ENCODE measurements at regions of chr1 and their contacts with region 1.

Region 1: GRCh38 chr1:41360993-41361753 is at the start of gene FOXO6:
- DNase-seq: peak; percentile 95 to 99
- H3K4me3 ChIP-seq: peak within 1 kb of the TSS; percentile 40 to 67 (median 47)
- H3K27ac ChIP-seq: no peak within 1 kb of the TSS
- H3K4me1 ChIP-seq: peaks cover 3 to 58% (median 42%) of the 10 kb centered on the region in 4 experiments
- H3K27me3 ChIP-seq: peaks cover 21 to 38% (median 36%) of the 10 kb centered on the region in 4 experiments
- CTCF ChIP-seq: peak; percentile 73 to 85 (median 76)
- EP300 ChIP-seq: no peak
- POLR2A ChIP-seq: no peak
- RAD21 ChIP-seq: peak; percentile 68 to 84
- total RNA-seq, gene FOXO6: 3.0 and 3.8 TPM in 2 replicates

Region 2: DNA sequence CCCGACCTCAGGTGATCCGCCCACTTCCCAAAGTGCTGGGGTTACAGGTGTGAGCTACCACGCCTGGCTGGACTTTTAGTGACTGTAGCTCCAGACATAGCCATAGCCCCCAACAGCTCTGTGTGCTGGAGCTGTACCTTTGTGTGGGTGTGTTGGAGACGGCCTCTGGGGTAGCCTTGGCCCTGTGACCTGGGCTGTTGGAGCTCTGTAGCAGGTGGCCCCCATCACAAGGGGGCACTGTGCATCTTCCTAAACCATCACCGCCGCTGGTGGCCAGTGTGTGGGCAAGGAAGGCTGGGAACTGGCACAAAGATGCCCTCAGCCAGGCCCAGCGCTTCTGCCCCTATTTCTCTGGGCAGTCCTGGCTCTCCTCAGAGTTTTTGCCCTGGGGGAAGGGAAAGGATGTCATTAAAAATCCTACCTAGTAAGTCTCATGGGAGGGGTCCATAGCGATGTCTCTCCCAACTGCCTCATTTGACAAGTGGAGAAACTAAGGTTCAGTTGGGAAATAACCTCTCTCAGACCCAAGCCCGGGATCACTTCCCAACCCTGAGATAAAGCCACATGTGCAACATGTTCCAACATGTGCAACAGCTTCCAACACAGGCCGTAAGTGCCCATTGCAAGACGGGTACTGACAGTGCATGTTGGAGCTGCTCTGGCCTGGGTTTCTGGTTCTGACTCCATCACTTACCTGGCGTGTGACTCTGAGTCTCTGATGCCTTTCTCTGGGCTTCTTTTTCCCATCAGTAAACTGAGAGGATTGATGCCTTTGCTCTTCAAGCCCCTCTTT is 38.1 kb before region 1 on chr1:
- CTCF ChIA-PET with region 1: interaction called, 26 read pairs
- POLR2A ChIA-PET with region 1: no interaction called
- DNase-seq: peak; percentile 36 to 80
- H3K4me3 ChIP-seq: no peak overlapping the region
- H3K27ac ChIP-seq: no peak overlapping the region
- H3K4me1 ChIP-seq: peaks cover 0 to 10% (median 6%) of the 10 kb centered on the region in 4 experiments; a peak in 6 of 7 replicates
- H3K27me3 ChIP-seq: no peaks in the 10 kb centered on the region; a peak in 1 of 7 replicates
- CTCF ChIP-seq: peak; percentile 87 to 93 (median 89)
- EP300 ChIP-seq: no peak
- POLR2A ChIP-seq: no peak
- RAD21 ChIP-seq: peak; percentile 94 to 96

Region 3: DNA sequence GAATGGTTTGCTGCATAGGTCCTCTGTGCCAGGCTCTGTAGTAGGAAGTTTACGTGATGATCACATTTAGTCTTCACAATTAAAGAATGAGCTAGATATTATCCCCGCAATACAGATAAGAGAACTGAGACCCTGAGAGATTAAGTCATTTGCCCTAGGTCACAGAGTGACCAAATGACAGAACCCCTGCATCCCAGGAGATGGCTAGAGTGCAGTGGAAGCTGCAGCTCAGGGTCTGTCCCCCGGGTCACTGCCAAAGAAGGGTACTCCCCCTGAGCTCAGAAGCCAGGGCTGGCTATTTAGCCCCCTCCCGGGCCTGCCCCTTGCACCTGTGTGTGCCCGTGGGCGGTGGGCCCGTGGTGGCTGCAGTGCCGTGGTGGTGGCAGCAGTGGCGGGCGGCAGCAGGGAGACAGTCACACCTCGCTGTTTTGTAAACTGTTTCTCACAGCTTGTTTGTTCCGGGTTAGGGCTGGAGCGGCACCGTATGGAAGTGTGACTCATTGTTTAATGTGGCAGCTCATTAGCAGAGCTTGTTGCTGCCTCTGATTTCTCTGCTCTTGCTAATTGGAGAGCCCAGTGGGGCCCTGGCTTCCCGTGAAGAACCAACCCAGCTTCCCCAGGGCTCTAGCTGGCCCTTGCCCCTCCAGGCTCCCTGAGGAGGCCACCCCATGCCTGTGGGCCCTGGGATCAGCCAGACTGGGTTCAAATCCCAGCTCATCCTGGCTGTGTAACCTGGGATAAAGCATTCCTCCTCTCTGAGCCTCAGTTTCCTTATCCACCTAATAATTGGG is 19.2 kb before region 1 on chr1:
- CTCF ChIA-PET with region 1: interaction called, 18 read pairs
- POLR2A ChIA-PET with region 1: interaction called, 3 read pairs
- DNase-seq: no peak
- H3K4me3 ChIP-seq: no peak overlapping the region
- H3K27ac ChIP-seq: no peak overlapping the region
- H3K4me1 ChIP-seq: peaks cover 0 to 7% (median 2%) of the 10 kb centered on the region in 4 experiments; a peak in 3 of 7 replicates
- H3K27me3 ChIP-seq: no peaks in the 10 kb centered on the region; a peak in 2 of 7 replicates
- CTCF ChIP-seq: no peak
- EP300 ChIP-seq: no peak
- POLR2A ChIP-seq: no peak
- RAD21 ChIP-seq: no peak

Region 4: DNA sequence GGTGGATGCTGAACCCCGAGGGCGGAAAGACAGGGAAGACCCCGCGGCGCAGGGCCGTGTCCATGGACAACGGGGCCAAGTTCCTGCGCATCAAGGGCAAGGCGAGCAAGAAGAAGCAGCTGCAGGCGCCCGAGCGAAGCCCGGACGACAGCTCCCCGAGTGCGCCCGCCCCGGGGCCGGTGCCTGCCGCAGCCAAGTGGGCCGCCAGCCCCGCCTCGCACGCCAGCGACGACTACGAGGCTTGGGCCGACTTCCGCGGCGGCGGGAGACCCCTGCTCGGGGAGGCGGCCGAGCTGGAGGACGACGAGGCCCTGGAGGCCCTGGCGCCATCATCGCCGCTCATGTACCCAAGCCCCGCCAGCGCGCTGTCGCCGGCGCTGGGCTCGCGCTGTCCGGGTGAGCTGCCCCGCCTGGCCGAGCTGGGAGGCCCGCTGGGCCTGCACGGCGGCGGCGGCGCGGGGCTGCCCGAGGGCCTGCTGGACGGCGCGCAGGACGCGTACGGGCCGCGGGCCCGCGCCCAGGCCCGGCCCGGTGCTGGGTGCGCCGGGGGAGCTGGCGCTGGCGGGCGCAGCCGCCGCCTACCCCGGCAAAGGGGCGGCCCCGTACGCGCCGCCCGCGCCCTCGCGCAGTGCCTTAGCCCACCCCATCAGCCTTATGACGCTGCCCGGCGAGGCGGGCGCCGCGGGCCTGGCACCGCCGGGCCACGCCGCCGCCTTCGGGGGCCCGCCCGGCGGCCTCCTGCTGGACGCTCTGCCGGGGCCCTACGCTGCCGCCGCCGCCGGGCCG is 20.7 kb after region 1 on chr1:
- CTCF ChIA-PET with region 1: interaction called, 173 read pairs
- POLR2A ChIA-PET with region 1: interaction called, 10 read pairs
- DNase-seq: no peak
- H3K4me3 ChIP-seq: peak overlapping the region; percentile 44 to 72 (median 56)
- H3K27ac ChIP-seq: no peak overlapping the region
- H3K4me1 ChIP-seq: peaks cover 0 to 29% (median 20%) of the 10 kb centered on the region in 4 experiments; a peak in 6 of 7 replicates
- H3K27me3 ChIP-seq: peaks cover 5 to 40% (median 34%) of the 10 kb centered on the region in 4 experiments
- CTCF ChIP-seq: no peak
- EP300 ChIP-seq: no peak
- POLR2A ChIP-seq: no peak
- RAD21 ChIP-seq: no peak

Region 5: DNA sequence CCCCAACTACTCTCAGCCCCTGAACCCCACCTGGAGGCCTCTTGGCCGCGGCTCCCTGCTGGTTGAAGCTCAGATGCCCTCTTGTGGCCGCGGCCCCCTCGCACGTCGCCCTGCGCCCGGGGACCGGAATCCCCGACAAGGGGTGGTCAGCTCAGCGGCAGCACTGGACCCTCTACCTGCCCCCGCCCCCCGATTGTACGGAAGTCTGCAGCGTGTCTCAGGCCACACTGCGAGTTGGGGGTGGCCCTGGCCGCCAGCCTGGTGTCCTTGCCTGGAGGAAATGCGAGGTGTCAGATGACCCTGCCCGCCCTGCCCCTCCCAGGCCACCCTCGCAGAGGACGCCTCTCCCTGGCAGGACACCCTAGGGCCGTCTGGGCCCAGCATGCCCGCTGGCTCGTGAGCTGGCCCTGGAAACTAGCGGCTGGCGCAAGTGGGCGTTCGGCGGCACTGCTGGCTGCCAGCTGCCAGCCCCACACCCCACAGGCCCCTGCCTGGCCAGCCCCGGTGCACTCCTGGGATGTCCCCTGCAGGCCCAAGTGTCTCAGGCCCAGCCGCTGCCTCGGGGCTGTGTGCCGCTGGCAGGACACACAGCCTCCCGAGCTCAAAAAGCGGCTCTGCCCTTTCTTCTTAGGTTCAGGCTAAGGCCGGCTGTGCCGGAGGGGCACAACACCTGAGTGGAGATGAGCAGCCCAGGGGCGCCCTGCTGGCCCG is 62.5 kb after region 1 on chr1:
- CTCF ChIA-PET with region 1: interaction called, 162 read pairs
- POLR2A ChIA-PET with region 1: interaction called, 5 read pairs
- DNase-seq: peak in 1 of 2 experiments; percentile 79
- H3K4me3 ChIP-seq: no peak overlapping the region
- H3K27ac ChIP-seq: no peak overlapping the region
- H3K4me1 ChIP-seq: peaks cover 0 to 7% (median 2%) of the 10 kb centered on the region in 4 experiments; a peak in 4 of 7 replicates
- H3K27me3 ChIP-seq: no peaks in the 10 kb centered on the region
- CTCF ChIP-seq: peak; percentile 62 to 89 (median 65)
- EP300 ChIP-seq: no peak
- POLR2A ChIP-seq: no peak
- RAD21 ChIP-seq: peak; percentile 58 to 72